ENCODE measurements at regions of chr13 and their contacts with region 1.

Region 1: DNA sequence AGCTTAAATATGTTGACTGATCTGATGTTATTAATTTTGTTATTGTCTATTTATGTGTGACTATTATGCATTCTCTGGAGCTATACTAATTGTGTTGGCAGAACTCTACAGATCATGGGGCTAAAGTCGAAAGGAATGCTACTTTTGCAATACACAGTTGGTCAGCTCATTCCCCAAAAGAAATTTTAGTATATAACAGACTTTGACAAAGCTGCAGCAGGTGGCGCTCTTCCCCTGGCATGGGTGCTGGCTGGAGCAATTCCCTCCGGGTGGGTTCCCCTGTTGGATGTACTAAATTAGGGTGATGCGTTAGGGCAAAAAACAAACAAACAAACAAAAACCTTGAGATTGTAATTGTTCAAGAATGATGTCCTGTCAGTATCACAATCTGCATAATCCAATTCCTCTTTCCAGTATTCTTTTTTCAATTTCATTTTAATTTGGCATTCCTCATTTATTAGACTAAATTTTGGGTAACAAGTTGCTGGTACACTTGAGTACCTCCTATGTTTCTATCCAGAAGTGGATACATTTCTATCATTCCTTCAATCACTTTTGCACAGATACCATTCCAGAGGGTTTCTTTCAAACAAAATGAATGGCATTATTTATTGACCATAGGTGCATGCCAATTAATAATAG is 322.8 kb upstream of the EDNRB start:
- DNase-seq: peak; percentile 27
- ATAC-seq: peak; percentile 83
- H3K4me3 ChIP-seq: no peak overlapping the region
- H3K27ac ChIP-seq: no peak overlapping the region
- H3K4me1 ChIP-seq: no peaks in the 10 kb centered on the region
- H3K27me3 ChIP-seq: no peaks in the 10 kb centered on the region
- CTCF ChIP-seq: peak; percentile 69
- EP300 ChIP-seq: no peak
- POLR2A ChIP-seq: no peak
- RAD21 ChIP-seq: peak; percentile 58

Region 2: GRCh38 chr13:78520425-78520824 is 279.0 kb after region 1 on chr13:
- CTCF ChIA-PET with region 1: no interaction called
- POLR2A ChIA-PET with region 1: no interaction called
- in situ Hi-C with region 1: no loop called
- intact Hi-C with region 1: no loop called
- DNase-seq: no peak
- ATAC-seq: no peak
- H3K4me3 ChIP-seq: no peak overlapping the region
- H3K27ac ChIP-seq: no peak overlapping the region
- H3K4me1 ChIP-seq: no peaks in the 10 kb centered on the region
- H3K27me3 ChIP-seq: no peaks in the 10 kb centered on the region
- CTCF ChIP-seq: no peak
- EP300 ChIP-seq: no peak
- POLR2A ChIP-seq: no peak
- RAD21 ChIP-seq: no peak

Region 3: GRCh38 chr13:78638216-78638615 is 396.8 kb after region 1 on chr13:
- CTCF ChIA-PET with region 1: no interaction called
- POLR2A ChIA-PET with region 1: no interaction called
- in situ Hi-C with region 1: no loop called
- intact Hi-C with region 1: no loop called
- DNase-seq: no peak
- ATAC-seq: no peak
- H3K4me3 ChIP-seq: no peak overlapping the region
- H3K27ac ChIP-seq: no peak overlapping the region
- H3K4me1 ChIP-seq: no peaks in the 10 kb centered on the region
- H3K27me3 ChIP-seq: no peaks in the 10 kb centered on the region
- CTCF ChIP-seq: no peak
- EP300 ChIP-seq: no peak
- POLR2A ChIP-seq: no peak
- RAD21 ChIP-seq: no peak

Region 4: DNA sequence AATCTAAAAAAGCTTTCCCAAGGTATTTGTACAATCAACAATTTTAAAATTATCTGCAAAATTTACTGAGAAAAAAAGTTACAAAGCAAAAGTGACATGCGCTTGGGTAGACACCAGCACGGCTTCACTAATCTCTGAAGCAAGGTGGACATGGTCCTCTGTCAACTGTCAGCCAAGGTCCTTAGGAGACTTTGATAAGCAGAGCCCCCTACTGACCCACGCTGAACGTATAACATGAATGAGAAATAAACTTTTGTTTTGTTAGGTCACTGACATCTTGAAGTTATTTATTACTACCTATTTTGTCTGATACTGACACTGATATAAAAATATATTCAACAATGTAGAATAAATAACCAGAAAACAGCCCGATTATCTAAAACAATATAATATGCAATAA is 518.3 kb after region 1 on chr13:
- CTCF ChIA-PET with region 1: no interaction called
- POLR2A ChIA-PET with region 1: no interaction called
- in situ Hi-C with region 1: no loop called
- intact Hi-C with region 1: loop called (anchors 1 kb)
- DNase-seq: peak; percentile 5
- ATAC-seq: peak; percentile 57; the same call in 1 of the 3 replicates
- H3K4me3 ChIP-seq: no peak overlapping the region
- H3K27ac ChIP-seq: no peak overlapping the region
- H3K4me1 ChIP-seq: no peaks in the 10 kb centered on the region
- H3K27me3 ChIP-seq: no peaks in the 10 kb centered on the region
- CTCF ChIP-seq: no peak
- EP300 ChIP-seq: no peak
- POLR2A ChIP-seq: no peak
- RAD21 ChIP-seq: no peak

Region 5: DNA sequence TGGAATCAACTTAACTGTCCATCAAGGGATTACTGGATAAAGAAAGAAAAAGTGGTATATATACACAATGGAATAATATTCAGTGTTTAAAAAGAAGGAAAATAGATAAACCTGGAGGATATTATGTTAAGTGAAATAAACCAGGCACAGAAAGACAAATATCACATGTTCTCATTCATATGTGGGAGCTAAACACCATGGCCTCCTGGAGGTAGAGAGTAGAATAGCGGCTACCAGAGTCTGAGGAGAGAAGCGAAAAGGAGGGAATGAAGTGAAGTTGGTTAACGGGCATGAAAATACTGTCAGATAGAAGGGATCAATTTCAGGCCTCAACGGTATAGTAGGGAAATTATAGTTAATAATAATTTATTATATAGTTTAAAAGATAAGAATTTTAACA is 565.1 kb after region 1 on chr13:
- CTCF ChIA-PET with region 1: no interaction called
- POLR2A ChIA-PET with region 1: no interaction called
- in situ Hi-C with region 1: no loop called
- intact Hi-C with region 1: loop called (anchors 1 kb)
- DNase-seq: peak; percentile 18
- ATAC-seq: peak; percentile 77
- H3K4me3 ChIP-seq: no peak overlapping the region
- H3K27ac ChIP-seq: no peak overlapping the region
- H3K4me1 ChIP-seq: no peaks in the 10 kb centered on the region
- H3K27me3 ChIP-seq: no peaks in the 10 kb centered on the region
- CTCF ChIP-seq: peak; percentile 31
- EP300 ChIP-seq: no peak
- POLR2A ChIP-seq: no peak
- RAD21 ChIP-seq: no peak